Mucosa of descending colon (tissue), 3 donors: ENCODE measurements at regions of chr17 and their contacts with region 1.

Region 1: GRCh38 chr17:40443583-40444327 is 505 bp downstream of the IGFBP4 start:
- DNase-seq: peak; percentile 88 to 90 (median 88)
- ATAC-seq: peak; percentile 66
- H3K4me3 ChIP-seq: peak overlapping the region; percentile 44
- H3K4me1 ChIP-seq: peaks cover 38% of the 10 kb centered on the region
- CTCF ChIP-seq: peak; percentile 46

Region 2: GRCh38 chr17:40474419-40475002 is 30.8 kb after region 1 on chr17:
- intact Hi-C with region 1: loop called in 1 of 2 experiments (anchors 2 kb)
- DNase-seq: no peak
- ATAC-seq: no peak
- H3K4me3 ChIP-seq: no peak overlapping the region
- H3K4me1 ChIP-seq: peaks cover 4% of the 10 kb centered on the region
- CTCF ChIP-seq: no peak

Region 3: DNA sequence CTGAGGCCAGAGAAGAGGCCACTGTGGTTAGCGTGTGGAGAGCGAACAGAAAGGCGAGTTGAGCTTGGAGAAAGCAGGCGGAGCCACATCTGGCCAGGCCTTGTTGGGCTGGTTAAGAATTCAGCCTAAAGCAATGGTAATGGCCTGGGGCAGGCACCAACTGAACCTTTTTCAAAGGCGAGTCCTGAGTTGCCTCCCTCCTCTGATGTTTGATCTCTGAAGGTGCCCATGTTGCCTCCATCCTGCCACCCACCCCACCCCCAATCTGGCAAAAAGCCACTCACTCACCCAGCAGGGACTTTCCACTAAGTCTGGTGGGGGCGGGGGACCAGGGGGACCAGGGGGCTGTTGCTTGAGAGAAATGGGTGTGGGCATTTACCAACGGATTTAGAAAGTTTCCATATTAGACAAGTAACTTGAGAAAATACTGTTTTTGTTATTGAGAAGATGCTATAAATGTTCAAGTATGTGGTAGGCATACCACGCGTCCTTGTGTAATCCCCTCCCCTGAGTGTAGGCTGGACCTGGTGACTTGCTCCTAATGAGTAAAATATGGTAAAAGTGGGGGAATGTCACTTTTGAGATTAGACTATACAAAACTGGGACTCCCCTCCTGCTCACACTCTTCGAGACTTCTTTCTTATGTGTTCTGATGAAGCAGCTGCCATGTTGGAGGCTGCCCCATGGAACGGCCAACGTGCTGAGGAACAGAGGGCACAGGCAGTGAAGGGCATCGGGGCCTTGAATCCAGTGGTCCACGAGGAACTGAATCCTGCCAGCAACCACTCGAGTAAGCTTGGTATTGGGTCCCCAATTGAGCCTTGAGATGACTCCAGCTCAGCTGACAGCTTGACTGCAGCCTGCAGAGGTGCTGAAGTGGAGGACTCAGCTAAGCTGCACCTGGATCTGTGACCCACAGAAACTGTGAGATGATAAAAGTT is 87.6 kb after region 1 on chr17:
- intact Hi-C with region 1: loop called (anchors 5 to 10 kb)
- DNase-seq: peak in 1 of 3 donors; percentile 45
- ATAC-seq: no peak
- H3K4me3 ChIP-seq: no peak overlapping the region
- H3K4me1 ChIP-seq: peaks cover 16% of the 10 kb centered on the region
- CTCF ChIP-seq: no peak

Region 4: GRCh38 chr17:40536295-40537171 is 92.8 kb after region 1 on chr17:
- intact Hi-C with region 1: loop called (anchors 5 to 10 kb)
- DNase-seq: peak in 1 of 3 donors; percentile 27
- ATAC-seq: no peak
- H3K4me3 ChIP-seq: no peak overlapping the region
- H3K4me1 ChIP-seq: peaks cover 16% of the 10 kb centered on the region
- CTCF ChIP-seq: no peak

Region 5: DNA sequence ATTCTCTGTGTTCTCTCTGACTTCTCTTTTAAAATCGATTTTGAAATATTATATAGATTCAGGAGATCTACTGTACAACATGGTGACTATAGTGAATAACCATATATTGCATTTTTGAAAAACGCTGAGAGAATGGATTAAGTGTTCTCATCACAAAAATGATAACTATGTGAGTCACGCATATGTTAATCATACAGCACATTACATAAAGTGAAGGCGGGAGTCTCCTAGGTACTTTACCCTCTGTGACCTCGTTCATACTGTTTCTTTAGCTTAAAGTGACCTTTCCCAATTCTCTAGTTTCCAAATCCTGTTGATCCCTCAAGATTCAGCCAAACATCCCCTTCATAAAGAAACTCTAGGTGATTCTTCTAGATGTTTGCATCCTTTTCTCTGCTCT is 559.1 kb after region 1 on chr17:
- intact Hi-C with region 1: no loop called
- DNase-seq: no peak
- ATAC-seq: no peak
- H3K4me3 ChIP-seq: no peak overlapping the region
- H3K4me1 ChIP-seq: no peaks in the 10 kb centered on the region
- CTCF ChIP-seq: no peak